ENCODE measurements at regions of chr2 and their contacts with region 1.

Region 1: DNA sequence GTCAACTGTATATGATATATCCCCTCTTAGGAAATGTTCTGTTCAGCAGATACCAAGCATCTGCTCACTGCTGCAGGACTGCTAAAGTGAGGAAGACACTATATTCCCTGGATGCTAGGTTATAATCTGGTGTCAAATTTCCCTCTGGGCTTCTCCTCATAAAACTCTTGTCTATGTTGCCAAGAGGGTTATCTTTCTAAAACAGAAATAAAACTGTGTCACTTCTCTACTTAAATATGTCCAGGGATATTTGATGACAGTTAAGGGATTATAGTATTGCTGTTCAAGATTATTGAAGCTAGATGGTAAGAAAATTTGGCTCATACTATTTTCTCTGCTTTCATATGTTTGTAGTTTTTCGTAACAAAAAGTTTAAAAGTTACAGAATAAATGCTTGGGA is 30.5 kb upstream of the SNRNP27 start:
- DNase-seq: no peak
- ATAC-seq: no peak
- H3K4me3 Mint-ChIP-seq: no peak overlapping the region
- H3K27ac Mint-ChIP-seq: no peak overlapping the region
- H3K4me1 Mint-ChIP-seq: no peaks in the 10 kb centered on the region
- H3K27me3 Mint-ChIP-seq: no peaks in the 10 kb centered on the region
- CTCF ChIP-seq: no peak

Region 2: GRCh38 chr2:68857855-68858456 is 1005.3 kb before region 1 on chr2:
- CTCF ChIA-PET with region 1: no interaction called
- POLR2A ChIA-PET with region 1: no interaction called
- intact Hi-C with region 1: no loop called
- DNase-seq: no peak
- ATAC-seq: peak; percentile 94
- H3K4me3 Mint-ChIP-seq: no peak overlapping the region
- H3K27ac Mint-ChIP-seq: peak overlapping the region; percentile 65
- H3K4me1 Mint-ChIP-seq: peaks cover 19% of the 10 kb centered on the region
- H3K27me3 Mint-ChIP-seq: no peaks in the 10 kb centered on the region
- CTCF ChIP-seq: no peak

Region 3: GRCh38 chr2:69660637-69661036 is 202.7 kb before region 1 on chr2:
- CTCF ChIA-PET with region 1: no interaction called
- POLR2A ChIA-PET with region 1: no interaction called
- intact Hi-C with region 1: no loop called
- DNase-seq: no peak
- ATAC-seq: no peak
- H3K4me3 Mint-ChIP-seq: no peak overlapping the region
- H3K27ac Mint-ChIP-seq: no peak overlapping the region
- H3K4me1 Mint-ChIP-seq: no peaks in the 10 kb centered on the region
- H3K27me3 Mint-ChIP-seq: peaks cover 46% of the 10 kb centered on the region
- CTCF ChIP-seq: no peak

Region 4: GRCh38 chr2:69902213-69902922 is 39.1 kb after region 1 on chr2:
- CTCF ChIA-PET with region 1: no interaction called
- POLR2A ChIA-PET with region 1: no interaction called
- intact Hi-C with region 1: loop called (anchors 5 kb)
- DNase-seq: no peak
- ATAC-seq: peak; percentile 79
- H3K4me3 Mint-ChIP-seq: peak overlapping the region; percentile 76
- H3K27ac Mint-ChIP-seq: peak overlapping the region; percentile 92
- H3K4me1 Mint-ChIP-seq: peaks cover 41% of the 10 kb centered on the region
- H3K27me3 Mint-ChIP-seq: no peaks in the 10 kb centered on the region
- CTCF ChIP-seq: no peak